PC-9 (cell line): ENCODE measurements at regions of chr2 and their contacts with region 1.

Region 1: GRCh38 chr2:227713159-227713690 is 4.6 kb downstream of the SLC19A3 start:
- DNase-seq: no peak
- H3K4me3 ChIP-seq: no peak overlapping the region
- H3K27ac ChIP-seq: no peak overlapping the region
- H3K4me1 ChIP-seq: peaks cover 2% of the 10 kb centered on the region; the same call in 1 of the 2 replicates
- H3K27me3 ChIP-seq: no peaks in the 10 kb centered on the region
- CTCF ChIP-seq: no peak

Region 2: DNA sequence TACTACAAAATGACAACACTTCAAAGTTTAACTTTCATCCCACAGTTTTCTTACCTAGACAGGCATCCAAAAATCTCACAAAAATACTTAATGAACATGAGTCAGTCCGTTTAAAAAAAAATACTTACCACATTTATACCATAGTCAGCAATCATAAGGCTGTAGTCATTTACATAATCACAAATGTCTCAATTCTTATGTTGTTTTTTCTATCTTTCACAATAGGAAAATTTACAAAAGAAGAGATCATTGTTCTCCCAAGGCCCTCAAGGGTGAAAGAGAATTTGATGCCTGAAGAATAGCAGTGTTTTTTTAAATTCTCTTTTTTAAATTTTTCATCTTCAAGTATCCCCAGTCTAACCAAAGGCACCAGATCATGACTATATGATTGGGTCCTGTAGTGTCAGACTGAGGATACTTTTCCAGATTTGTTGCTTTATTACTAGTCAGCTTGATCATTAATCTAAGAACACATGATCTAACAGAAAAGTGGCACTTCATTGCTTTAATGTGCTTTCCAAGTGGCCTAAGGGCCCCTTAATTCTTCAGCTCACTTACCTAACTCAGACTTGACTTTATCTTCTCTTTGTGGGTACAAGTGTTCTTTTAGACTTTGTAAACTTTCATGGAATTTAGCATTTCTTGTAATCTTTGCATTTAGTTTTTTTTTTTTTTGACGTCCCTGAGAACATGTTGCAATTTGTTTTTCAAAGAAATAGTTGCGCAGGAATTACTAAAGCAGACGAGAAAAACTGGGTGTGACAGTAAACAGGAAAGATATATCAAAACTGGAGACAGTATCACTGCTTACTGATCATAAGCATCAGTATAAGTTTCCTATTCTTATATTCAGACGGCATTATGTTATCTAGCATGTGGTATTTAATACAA is 41.8 kb before region 1 on chr2:
- CTCF ChIA-PET with region 1: no interaction called
- POLR2A ChIA-PET with region 1: interaction called, 29 read pairs
- intact Hi-C with region 1: no loop called
- DNase-seq: no peak
- H3K4me3 ChIP-seq: no peak overlapping the region
- H3K27ac ChIP-seq: no peak overlapping the region
- H3K4me1 ChIP-seq: no peaks in the 10 kb centered on the region
- H3K27me3 ChIP-seq: no peaks in the 10 kb centered on the region
- CTCF ChIP-seq: no peak